Psoas muscle (tissue), 8 donors: ENCODE measurements at regions of chr10 and their contacts with region 1.

Region 1: DNA sequence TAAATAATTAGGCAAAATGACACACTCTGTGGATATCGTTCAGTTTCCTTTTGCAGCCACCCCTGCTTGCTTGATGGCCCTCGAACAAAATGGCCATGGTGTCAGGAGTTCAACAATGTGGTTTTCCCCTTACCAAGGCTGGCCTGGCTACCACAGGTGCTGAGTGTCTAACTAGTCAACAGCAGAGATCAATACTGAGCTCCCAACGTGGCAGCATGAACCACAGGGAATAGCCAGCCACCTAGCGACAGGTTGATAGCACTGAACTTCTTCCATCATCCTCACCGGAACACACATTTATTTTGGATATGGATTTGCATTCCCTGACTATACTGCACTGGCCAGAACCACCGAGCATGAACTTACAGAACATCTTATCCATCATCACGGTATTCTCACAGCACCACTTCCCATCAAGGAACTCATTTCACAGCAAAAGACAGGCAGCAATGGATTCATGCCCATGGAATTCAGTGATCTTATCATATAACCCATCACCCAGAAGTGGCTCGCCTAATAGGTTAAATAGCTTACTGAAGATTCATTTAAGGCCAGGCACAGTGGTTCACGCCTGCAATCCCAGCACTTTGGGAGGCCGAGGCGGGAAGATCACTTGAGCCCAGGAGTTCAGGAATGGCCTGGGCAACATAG is 6.3 kb downstream of the C10orf67 start:
- DNase-seq: no peak
- ATAC-seq: no peak
- H3K4me3 ChIP-seq: no peak overlapping the region
- H3K27ac ChIP-seq: no peak overlapping the region
- H3K4me1 ChIP-seq: no peaks in the 10 kb centered on the region
- H3K27me3 ChIP-seq: no peaks in the 10 kb centered on the region
- CTCF ChIP-seq: no peak

Region 2: GRCh38 chr10:23325132-23325531 is 13.2 kb before region 1 on chr10:
- intact Hi-C with region 1: no loop called
- DNase-seq: no peak
- ATAC-seq: no peak
- H3K4me3 ChIP-seq: no peak overlapping the region
- H3K27ac ChIP-seq: no peak overlapping the region
- H3K4me1 ChIP-seq: no peaks in the 10 kb centered on the region
- H3K27me3 ChIP-seq: peaks cover 0 to 4% (median 0%) of the 10 kb centered on the region in 3 donors
- CTCF ChIP-seq: no peak

Region 3: GRCh38 chr10:23453465-23453864 is 115.2 kb after region 1 on chr10:
- intact Hi-C with region 1: loop called in 1 of 2 experiments (anchors 5 kb)
- DNase-seq: no peak
- ATAC-seq: no peak
- H3K4me3 ChIP-seq: no peak overlapping the region
- H3K27ac ChIP-seq: no peak overlapping the region
- H3K4me1 ChIP-seq: peaks cover 6% of the 10 kb centered on the region
- H3K27me3 ChIP-seq: no peaks in the 10 kb centered on the region
- CTCF ChIP-seq: no peak

Region 4: GRCh38 chr10:23496727-23497126 is 158.4 kb after region 1 on chr10:
- intact Hi-C with region 1: no loop called
- DNase-seq: no peak
- ATAC-seq: no peak
- H3K4me3 ChIP-seq: no peak overlapping the region
- H3K27ac ChIP-seq: no peak overlapping the region
- H3K4me1 ChIP-seq: no peaks in the 10 kb centered on the region
- H3K27me3 ChIP-seq: no peaks in the 10 kb centered on the region
- CTCF ChIP-seq: no peak